ENCODE measurements at regions of chr17 and their contacts with region 1.

Region 1: DNA sequence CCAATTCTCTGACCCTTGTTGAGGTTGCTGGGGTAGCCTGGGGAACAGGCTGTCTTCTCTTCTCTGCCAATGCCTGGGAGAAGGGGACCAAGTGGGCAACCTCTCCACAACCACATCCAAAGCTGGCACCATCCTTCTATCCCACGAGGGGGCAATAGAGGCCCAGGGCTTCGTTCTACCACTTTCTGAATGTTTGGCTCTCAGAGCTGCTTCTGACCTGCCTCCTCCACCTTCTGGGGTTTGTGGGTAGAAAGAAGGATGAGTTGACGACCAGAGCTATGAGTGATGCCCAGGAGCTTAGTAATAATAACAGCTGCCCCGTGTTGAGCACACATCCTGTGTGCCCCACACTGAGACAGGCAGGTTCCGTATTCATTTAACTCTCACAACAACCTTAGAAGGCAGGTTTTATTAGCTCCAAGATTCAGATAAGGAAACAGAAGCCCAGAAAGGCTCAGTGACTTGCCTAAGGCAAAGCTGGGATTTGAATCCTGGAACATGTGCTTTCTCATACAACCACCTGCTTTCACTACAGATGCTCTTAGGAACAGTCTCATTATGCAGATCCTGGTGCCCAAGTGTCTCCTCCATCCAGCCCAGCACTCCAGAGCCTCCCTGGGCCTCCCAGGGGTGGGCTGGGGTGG is 11.1 kb downstream of the TSPOAP1 start:
- DNase-seq: peak; percentile 17
- H3K4me3 ChIP-seq: no peak overlapping the region
- CTCF ChIP-seq: peak; percentile 85

Region 2: GRCh38 chr17:58329035-58329809 is 11.7 kb after region 1 on chr17:
- CTCF ChIA-PET with region 1: interaction called, 22 read pairs
- POLR2A ChIA-PET with region 1: no interaction called
- DNase-seq: no peak
- H3K4me3 ChIP-seq: no peak overlapping the region
- CTCF ChIP-seq: peak; percentile 30

Region 3: DNA sequence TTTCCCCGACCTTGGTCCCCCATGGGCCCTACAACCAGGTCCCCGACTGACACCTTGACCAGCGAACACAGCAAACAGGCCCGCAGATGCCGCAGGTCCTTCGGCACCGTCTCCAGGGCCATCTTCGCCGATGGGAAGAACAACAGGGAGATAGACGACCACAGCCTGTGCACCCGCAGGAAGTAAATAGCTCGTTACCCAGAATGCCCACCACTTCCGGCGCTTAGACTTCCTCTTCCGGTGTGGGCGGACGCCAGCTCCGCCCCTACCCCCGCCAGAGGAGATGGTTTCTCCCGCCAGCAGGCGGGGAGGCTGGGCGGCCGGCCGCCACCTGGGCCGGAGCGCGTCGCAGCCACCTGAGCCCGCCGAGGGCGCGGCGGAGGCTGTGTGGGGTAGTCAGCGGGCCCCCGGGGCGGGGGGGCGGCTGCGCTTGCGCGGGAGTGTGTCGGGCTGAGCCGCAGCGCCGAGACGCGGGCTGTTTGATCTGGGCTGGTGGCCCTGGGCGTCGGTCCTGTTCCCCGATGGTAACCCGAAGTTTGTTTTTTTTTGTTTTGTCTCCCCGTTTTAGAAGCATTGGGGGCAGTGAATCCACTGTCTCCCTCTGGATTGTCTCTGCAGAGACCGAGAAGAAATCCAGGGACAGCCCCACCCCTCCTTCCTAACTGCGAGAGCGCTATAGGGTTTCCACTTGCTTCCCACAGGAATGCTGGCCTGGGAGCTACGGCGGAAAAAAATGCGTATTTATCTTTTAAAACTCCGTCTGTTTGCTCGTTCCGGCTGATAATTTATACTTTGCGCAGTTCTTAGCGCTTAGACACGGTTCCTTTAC is 34.7 kb after region 1 on chr17 and contains the start of gene SUPT4H1:
- CTCF ChIA-PET with region 1: interaction called, 43 read pairs
- POLR2A ChIA-PET with region 1: interaction called, 18 read pairs
- DNase-seq: peak; percentile 36
- H3K4me3 ChIP-seq: peak within 1 kb of the TSS; percentile 99
- CTCF ChIP-seq: no peak

Region 4: DNA sequence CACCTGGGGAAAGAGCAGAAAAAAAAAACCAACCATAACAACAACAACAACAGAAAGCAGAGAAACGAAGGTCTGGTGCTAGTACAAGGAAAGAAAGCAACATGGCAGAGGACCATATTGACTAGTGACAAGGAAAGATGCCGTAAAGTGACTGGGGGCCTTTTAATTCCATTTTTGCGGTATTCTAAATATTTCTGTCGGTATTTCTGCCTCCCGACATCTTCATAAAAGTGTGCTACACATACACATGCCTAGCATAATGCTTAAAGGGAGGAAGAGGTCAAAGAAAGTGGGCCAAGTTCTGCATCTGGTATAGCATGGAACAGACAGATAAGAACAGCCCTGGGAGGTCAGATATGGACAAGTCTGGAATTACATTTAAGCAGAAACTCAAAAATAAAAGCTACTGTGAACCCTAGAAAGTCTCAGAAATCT is 119.3 kb after region 1 on chr17:
- CTCF ChIA-PET with region 1: interaction called, 17 read pairs
- POLR2A ChIA-PET with region 1: no interaction called
- DNase-seq: no peak
- H3K4me3 ChIP-seq: no peak overlapping the region
- CTCF ChIP-seq: no peak

Region 5: GRCh38 chr17:58492238-58493121 is 174.9 kb after region 1 on chr17:
- CTCF ChIA-PET with region 1: no interaction called
- POLR2A ChIA-PET with region 1: no interaction called
- DNase-seq: no peak
- H3K4me3 ChIP-seq: no peak overlapping the region
- CTCF ChIP-seq: no peak

Measured in AG04449 (cell line).